ENCODE measurements at regions of chr1 and their contacts with region 1.

Region 1: GRCh38 chr1:42681741-42682483 is at the start of gene YBX1:
- DNase-seq: peak; percentile 85 to 98 (median 97)
- ATAC-seq: peak; percentile 94
- H3K4me3 ChIP-seq: peak within 1 kb of the TSS; percentile 74
- H3K4me3 Mint-ChIP-seq: peak within 1 kb of the TSS; percentile 95 to 99 (median 98)
- H3K27ac ChIP-seq: peak within 1 kb of the TSS; percentile 82
- H3K27ac Mint-ChIP-seq: peak within 1 kb of the TSS; percentile 93 to 98 (median 97)
- H3K4me1 ChIP-seq: peaks cover 35 to 47% of the 10 kb centered on the region in 2 donors
- H3K4me1 Mint-ChIP-seq: peaks cover 42 to 66% (median 54%) of the 10 kb centered on the region in 7 donors
- H3K27me3 ChIP-seq: no peaks in the 10 kb centered on the region
- H3K27me3 Mint-ChIP-seq: no peaks in the 10 kb centered on the region
- total RNA-seq, gene YBX1: 277 to 471 (median 287) TPM

Region 2: DNA sequence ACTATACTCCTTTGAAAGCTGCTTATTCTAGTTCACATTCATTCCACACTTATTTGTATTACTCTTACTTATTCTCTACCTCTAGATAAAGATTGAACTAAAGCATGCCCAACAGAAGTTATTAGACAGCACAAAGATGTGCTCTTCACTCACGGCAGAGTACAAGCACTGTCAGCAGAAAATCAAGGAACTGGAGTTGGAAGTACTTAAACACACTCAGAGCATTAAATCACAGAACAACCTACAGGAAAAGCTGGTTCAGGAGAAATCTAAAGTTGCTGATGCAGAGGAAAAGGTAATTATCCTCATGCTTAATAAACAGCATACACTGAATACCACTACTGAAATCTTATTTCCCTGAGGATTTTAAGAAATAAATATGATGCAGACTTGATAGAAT is 105.0 kb before region 1 on chr1:
- CTCF ChIA-PET with region 1: no interaction called
- POLR2A ChIA-PET with region 1: no interaction called
- intact Hi-C with region 1: loop called (anchors 1 to 5 kb)
- DNase-seq: no peak
- ATAC-seq: no peak
- H3K4me3 ChIP-seq: no peak overlapping the region
- H3K4me3 Mint-ChIP-seq: no peak overlapping the region
- H3K27ac ChIP-seq: no peak overlapping the region
- H3K27ac Mint-ChIP-seq: no peak overlapping the region
- H3K4me1 ChIP-seq: no peaks in the 10 kb centered on the region
- H3K4me1 Mint-ChIP-seq: peaks cover 0 to 4% (median 0%) of the 10 kb centered on the region in 7 donors
- H3K27me3 ChIP-seq: no peaks in the 10 kb centered on the region
- H3K27me3 Mint-ChIP-seq: peaks cover 0 to 8% (median 0%) of the 10 kb centered on the region in 5 donors

Region 3: GRCh38 chr1:42766741-42767509 is 85.0 kb after region 1 on chr1 and contains the starts of genes C1orf50 and P3H1:
- CTCF ChIA-PET with region 1: no interaction called
- POLR2A ChIA-PET with region 1: interaction called, 44 read pairs
- intact Hi-C with region 1: loop called (anchors 1 kb)
- DNase-seq: peak; percentile 98 to 100 (median 100)
- ATAC-seq: peak; percentile 96
- H3K4me3 ChIP-seq: peak within 1 kb of the TSS; percentile 91
- H3K4me3 Mint-ChIP-seq: peak within 1 kb of the TSS in 1 of 10 donors; percentile 92
- H3K27ac ChIP-seq: peak within 1 kb of the TSS; percentile 84
- H3K27ac Mint-ChIP-seq: peak within 1 kb of the TSS in 8 of 9 donors; percentile 70 to 96 (median 92)
- H3K4me1 ChIP-seq: peaks cover 25 to 35% of the 10 kb centered on the region in 2 donors
- H3K4me1 Mint-ChIP-seq: peaks cover 20 to 50% (median 32%) of the 10 kb centered on the region in 7 donors
- H3K27me3 ChIP-seq: no peaks in the 10 kb centered on the region
- H3K27me3 Mint-ChIP-seq: no peaks in the 10 kb centered on the region
- total RNA-seq, gene C1orf50: 7.0 to 20.8 (median 18.1) TPM
- total RNA-seq, gene P3H1: 32.5 to 61.8 (median 47.3) TPM

Region 4: GRCh38 chr1:42846257-42847110 is 164.6 kb after region 1 on chr1 and contains the start of gene ZNF691:
- CTCF ChIA-PET with region 1: interaction called, 3 read pairs
- POLR2A ChIA-PET with region 1: interaction called, 11 read pairs
- intact Hi-C with region 1: loop called in 1 of 2 experiments (anchors 1 kb)
- DNase-seq: peak; percentile 51 to 91 (median 84)
- ATAC-seq: peak; percentile 99
- H3K4me3 ChIP-seq: peak within 1 kb of the TSS; percentile 97
- H3K4me3 Mint-ChIP-seq: peak within 1 kb of the TSS; percentile 84 to 100 (median 96)
- H3K27ac ChIP-seq: peak within 1 kb of the TSS; percentile 72
- H3K27ac Mint-ChIP-seq: peak within 1 kb of the TSS; percentile 71 to 95 (median 85)
- H3K4me1 ChIP-seq: peaks cover 11 to 22% of the 10 kb centered on the region in 2 donors
- H3K4me1 Mint-ChIP-seq: peaks cover 19 to 38% (median 31%) of the 10 kb centered on the region in 7 donors
- H3K27me3 ChIP-seq: no peaks in the 10 kb centered on the region
- H3K27me3 Mint-ChIP-seq: no peaks in the 10 kb centered on the region
- total RNA-seq, gene ZNF691: 3.5 to 17.2 (median 12.8) TPM

Region 5: GRCh38 chr1:43706598-43707495 is 1024.9 kb after region 1 on chr1:
- CTCF ChIA-PET with region 1: no interaction called
- POLR2A ChIA-PET with region 1: no interaction called
- intact Hi-C with region 1: loop called in 1 of 2 experiments (anchors 2 kb)
- DNase-seq: peak; percentile 84 to 94 (median 89)
- ATAC-seq: peak; percentile 98
- H3K4me3 ChIP-seq: peak overlapping the region; percentile 92
- H3K4me3 Mint-ChIP-seq: peak overlapping the region; percentile 82 to 90 (median 88)
- H3K27ac ChIP-seq: peak overlapping the region; percentile 79
- H3K27ac Mint-ChIP-seq: peak overlapping the region in 7 of 9 donors; percentile 32 to 87 (median 79)
- H3K4me1 ChIP-seq: peaks cover 7 to 10% of the 10 kb centered on the region in 2 donors
- H3K4me1 Mint-ChIP-seq: peaks cover 7 to 46% (median 27%) of the 10 kb centered on the region in 7 donors
- H3K27me3 ChIP-seq: no peaks in the 10 kb centered on the region
- H3K27me3 Mint-ChIP-seq: no peaks in the 10 kb centered on the region

Measured in naive thymus-derived CD4-positive, alpha-beta T cell (primary cell).